ENCODE measurements at regions of chr20 and their contacts with region 1.

Region 1: DNA sequence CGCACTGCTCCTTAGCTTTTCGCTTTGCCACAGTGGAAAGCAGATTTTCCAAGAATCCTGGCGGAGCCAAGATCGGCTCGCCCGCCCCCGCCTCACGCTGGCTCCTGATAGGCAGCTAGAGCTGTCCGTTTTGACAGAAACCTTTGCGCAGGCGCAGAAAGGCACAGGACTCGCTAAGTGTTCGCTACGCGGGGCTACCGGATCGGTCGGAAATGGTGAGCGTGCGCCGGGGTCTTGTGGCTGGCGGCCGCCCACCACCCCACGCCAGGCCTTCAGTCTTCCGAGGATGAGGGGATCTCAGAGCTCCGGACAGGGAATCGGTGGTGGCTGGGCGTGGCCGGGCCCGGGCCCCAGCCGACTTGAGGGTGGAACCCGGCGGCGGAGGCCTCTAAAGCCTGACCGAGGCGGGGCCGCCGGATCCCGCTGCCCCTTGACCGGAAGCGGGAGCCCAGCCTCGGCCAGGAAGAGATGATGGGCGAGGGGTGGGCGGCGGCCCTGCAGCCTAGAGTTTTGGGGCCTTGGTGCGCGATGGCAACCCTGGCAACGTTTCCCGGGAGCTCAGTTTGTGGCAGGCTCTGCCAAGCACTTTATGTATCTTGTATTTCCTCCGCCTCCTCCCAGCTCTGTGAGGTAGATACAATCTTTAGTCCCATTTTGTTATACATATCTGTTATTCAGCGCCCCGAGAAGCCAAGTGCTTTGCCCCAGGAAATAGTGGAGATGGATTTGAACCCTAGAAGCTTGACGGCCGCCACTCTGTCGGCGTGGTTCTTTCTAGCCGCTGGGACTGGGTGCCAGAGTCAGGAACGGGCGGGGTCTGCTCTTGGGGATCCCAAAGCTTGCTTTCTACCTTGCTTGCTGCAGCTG is at the start of gene DYNLRB1:
- DNase-seq: peak; percentile 95
- H3K4me3 Mint-ChIP-seq: peak within 1 kb of the TSS; percentile 97
- H3K27ac Mint-ChIP-seq: peak within 1 kb of the TSS; percentile 95
- H3K4me1 Mint-ChIP-seq: peaks cover 37% of the 10 kb centered on the region
- H3K27me3 Mint-ChIP-seq: no peaks in the 10 kb centered on the region
- total RNA-seq, gene DYNLRB1: 107 to 109 TPM

Region 2: GRCh38 chr20:34363062-34363464 is 153.4 kb before region 1 on chr20 and contains the start of gene ITCH:
- CTCF ChIA-PET with region 1: interaction called, 14 read pairs
- POLR2A ChIA-PET with region 1: interaction called, 39 read pairs
- DNase-seq: peak; percentile 94
- H3K4me3 Mint-ChIP-seq: peak within 1 kb of the TSS; percentile 96
- H3K27ac Mint-ChIP-seq: peak within 1 kb of the TSS; percentile 90
- H3K4me1 Mint-ChIP-seq: peaks cover 46% of the 10 kb centered on the region
- H3K27me3 Mint-ChIP-seq: peaks cover 3% of the 10 kb centered on the region
- total RNA-seq, gene ITCH: 55.5 to 56.7 TPM

Region 3: DNA sequence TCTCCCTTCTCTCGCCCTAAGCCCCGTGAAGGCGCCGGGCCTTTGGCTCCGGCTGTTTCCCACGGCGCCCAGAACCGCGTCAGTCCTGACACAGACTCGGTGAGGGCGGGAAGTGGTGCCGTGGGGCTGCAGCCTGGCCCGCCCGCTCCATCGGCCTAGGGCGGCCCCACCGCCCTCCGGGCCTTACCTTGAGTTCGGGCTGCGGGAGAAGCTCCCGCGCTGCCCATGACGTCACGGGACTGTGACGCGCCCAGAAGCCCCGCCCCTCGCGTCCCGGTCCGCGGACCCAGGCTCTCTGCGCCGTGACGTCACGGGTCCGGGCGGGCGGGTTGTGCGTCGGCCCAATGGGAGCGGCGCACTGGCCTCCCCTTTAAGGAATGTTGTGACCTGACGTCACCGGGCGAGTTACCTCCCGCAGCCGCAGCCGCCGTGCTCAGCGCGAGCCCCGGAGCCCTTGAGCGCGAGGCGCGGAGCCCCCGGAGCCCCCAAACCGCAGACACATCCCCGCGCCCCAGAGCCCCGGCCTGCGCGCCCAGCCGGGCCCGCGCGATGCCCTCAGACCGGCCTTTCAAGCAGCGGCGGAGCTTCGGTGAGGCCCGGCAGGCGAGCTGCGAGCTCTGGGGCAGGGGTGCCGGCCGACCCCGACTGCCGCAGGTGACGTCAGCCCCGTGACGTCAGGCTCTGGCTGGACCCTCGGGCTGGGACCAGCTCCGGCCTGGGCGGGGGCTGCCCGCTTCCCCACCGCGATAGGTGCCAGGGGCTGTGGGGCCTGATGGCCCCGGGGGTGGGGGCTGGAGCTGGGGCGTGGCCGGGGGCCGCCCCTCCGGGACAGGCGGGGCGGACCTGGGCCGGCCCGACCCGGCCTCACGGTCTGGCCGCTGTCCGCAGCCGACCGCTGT is 42.1 kb after region 1 on chr20 and contains the start of gene MAP1LC3A:
- CTCF ChIA-PET with region 1: no interaction called
- POLR2A ChIA-PET with region 1: interaction called, 11 read pairs
- DNase-seq: peak; percentile 95
- H3K4me3 Mint-ChIP-seq: peak within 1 kb of the TSS; percentile 76
- H3K27ac Mint-ChIP-seq: peak within 1 kb of the TSS; percentile 58
- H3K4me1 Mint-ChIP-seq: peaks cover 18% of the 10 kb centered on the region
- H3K27me3 Mint-ChIP-seq: no peaks in the 10 kb centered on the region
- total RNA-seq, gene MAP1LC3A: 8.9 to 10.5 TPM

Region 4: DNA sequence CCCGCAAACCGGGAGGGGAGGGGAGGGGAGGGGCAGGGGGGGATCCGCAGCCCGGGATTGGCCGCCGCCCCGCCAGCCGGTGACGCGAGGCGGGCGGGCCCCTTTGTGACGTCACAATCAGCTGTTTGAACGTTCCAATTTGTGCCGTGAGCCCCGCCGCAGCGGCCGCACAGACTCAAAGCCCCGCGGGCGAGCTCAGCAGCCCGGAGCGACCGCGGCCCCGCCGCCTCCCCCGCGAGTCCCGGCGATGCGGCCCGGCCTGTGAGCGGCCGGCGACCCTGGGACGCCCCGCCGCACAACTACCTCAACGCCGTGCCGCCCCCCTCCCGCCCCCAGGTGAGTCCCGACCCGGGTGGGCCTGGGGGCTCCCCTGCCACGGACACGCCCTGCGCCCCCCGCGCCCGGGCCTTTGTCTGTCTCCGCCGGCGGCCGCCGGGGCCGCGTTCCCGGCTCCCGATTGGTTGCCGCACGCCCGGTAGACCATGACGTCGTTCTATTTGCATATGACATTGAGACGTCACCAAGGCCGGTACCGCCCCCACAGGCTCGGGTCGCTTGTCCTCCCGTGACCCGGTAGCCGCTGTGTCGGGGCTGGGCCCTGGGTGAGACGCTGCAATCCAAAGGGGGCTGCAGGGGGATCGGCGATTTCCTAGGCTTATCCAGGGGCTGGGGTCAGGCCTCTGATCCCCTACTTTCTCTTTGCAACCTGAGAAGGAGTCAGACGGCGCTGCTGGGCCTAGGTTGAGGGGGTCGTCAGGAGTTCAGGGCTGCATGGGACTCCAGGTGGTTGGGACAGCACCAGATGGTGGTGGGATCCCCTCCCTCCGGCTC is 187.9 kb after region 1 on chr20 and contains the start of gene TP53INP2:
- CTCF ChIA-PET with region 1: interaction called, 6 read pairs
- POLR2A ChIA-PET with region 1: interaction called, 15 read pairs
- DNase-seq: peak; percentile 92
- H3K4me3 Mint-ChIP-seq: peak within 1 kb of the TSS; percentile 91
- H3K27ac Mint-ChIP-seq: peak within 1 kb of the TSS; percentile 86
- H3K4me1 Mint-ChIP-seq: peaks cover 41% of the 10 kb centered on the region
- H3K27me3 Mint-ChIP-seq: peaks cover 13% of the 10 kb centered on the region
- total RNA-seq, gene TP53INP2: 3.3 TPM

Measured in activated CD4-positive, alpha-beta memory T cell treated with anti-CD3 and anti-CD28 coated beads, Interleukin-2, amount 10 ng/mL, durations not matched to agents 7 days and 5 days (primary cell).